ENCODE measurements at regions of chr4 and their contacts with region 1.

Region 1: GRCh38 chr4:3106339-3107186 is 32.1 kb downstream of the HTT start:
- DNase-seq: peak; percentile 63 to 89 (median 85)
- ATAC-seq: peak; percentile 100
- H3K4me3 ChIP-seq: no peak overlapping the region
- H3K4me3 Mint-ChIP-seq: no peak overlapping the region
- H3K27ac ChIP-seq: no peak overlapping the region
- H3K27ac Mint-ChIP-seq: peak overlapping the region; percentile 49
- H3K4me1 ChIP-seq: peaks cover 3% of the 10 kb centered on the region
- H3K4me1 Mint-ChIP-seq: peaks cover 8% of the 10 kb centered on the region
- H3K27me3 ChIP-seq: no peaks in the 10 kb centered on the region
- H3K27me3 Mint-ChIP-seq: no peaks in the 10 kb centered on the region
- CTCF ChIP-seq: peak; percentile 98

Region 2: DNA sequence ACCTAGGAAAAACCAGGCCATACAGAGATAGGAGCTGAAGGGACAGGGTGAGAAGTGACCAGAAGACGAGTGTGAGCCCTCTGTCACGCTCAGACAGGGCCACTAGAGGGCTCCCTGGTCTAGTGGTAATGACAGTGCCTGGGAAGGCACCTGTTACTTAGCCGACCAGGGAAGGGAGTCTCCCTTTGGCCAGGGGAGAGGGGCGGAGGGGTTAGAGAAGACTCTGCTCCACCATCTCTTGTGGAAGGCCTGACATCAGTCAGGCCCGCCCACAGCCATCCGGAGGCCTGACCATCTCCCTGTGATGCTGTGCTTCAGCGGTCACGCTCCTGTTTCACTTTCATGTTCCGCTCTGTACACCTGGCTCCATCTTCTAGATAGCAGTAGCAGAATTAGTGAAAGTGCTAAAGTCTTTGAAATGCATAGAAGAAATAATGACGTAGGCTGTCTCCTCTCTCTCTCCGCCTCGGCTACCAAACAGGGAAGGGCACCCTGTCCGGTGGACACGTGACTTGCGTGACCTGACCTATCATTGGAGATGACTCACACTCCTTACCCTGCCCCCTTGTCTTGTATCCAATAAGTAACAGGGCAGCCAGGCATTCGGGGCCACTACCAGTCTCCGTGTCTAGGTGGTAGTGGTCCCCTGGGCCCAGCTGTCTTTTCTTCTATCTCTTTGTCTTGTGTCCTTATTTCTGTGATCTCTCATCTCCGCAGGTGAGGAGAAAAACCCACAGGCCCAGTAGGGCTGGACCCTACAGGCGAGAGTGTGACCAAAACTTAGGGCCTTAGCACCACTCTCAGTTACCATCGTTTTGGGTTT is 58.9 kb before region 1 on chr4:
- CTCF ChIA-PET with region 1: no interaction called
- POLR2A ChIA-PET with region 1: no interaction called
- intact Hi-C with region 1: loop called (anchors 1 kb)
- DNase-seq: peak; percentile 44 to 87 (median 64)
- ATAC-seq: peak; percentile 73
- H3K4me3 ChIP-seq: peak overlapping the region; percentile 44 to 50
- H3K4me3 Mint-ChIP-seq: peak overlapping the region; percentile 78
- H3K27ac ChIP-seq: peak overlapping the region; percentile 27 to 79
- H3K27ac Mint-ChIP-seq: peak overlapping the region; percentile 60
- H3K4me1 ChIP-seq: peaks cover 15% of the 10 kb centered on the region
- H3K4me1 Mint-ChIP-seq: peaks cover 29% of the 10 kb centered on the region
- H3K27me3 ChIP-seq: no peaks in the 10 kb centered on the region
- H3K27me3 Mint-ChIP-seq: no peaks in the 10 kb centered on the region
- CTCF ChIP-seq: peak; percentile 61

Region 3: DNA sequence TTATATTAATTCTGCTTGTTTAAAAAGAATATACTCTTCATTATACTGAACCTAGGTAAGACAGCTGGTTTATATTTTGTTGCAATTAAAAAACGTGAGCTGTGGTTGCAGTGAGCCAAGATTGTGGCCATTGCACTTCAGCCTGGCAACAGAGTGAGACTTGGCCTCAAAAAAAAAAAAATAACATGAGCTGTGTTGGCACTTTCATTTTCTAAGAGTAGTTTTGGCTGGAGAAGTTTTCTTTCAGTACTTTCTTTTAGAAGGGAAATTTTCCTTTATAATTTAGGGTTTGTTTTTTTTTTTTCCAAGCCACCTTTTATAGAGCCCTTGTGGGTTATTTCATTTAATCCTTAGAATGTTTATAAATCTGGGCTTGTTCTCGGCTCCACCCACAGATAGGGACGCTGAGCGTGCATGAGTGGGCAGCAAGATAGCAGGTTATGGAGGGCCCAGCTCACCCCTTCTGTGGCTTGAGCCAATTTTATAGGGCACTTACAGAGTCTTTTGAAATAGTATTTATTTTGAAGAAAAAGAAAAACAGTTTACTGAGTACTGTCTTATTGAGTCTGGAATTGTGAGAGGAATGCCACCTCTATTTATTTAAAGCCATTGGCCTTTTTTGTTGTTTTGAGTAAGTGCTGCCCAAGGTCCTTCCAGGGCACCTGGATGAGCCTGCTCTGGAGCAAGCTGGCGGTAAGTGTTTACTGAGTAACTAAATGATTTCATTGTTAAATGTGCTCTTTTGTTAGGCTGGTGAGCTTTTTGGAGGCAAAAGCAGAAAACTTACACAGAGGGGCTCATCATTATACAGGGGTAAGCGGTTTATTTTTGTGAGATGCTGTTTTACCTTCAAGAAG is 28.8 kb after region 1 on chr4:
- CTCF ChIA-PET with region 1: interaction called, 23 read pairs
- POLR2A ChIA-PET with region 1: no interaction called
- intact Hi-C with region 1: no loop called
- DNase-seq: no peak
- ATAC-seq: no peak
- H3K4me3 ChIP-seq: no peak overlapping the region
- H3K4me3 Mint-ChIP-seq: no peak overlapping the region
- H3K27ac ChIP-seq: no peak overlapping the region
- H3K27ac Mint-ChIP-seq: no peak overlapping the region
- H3K4me1 ChIP-seq: no peaks in the 10 kb centered on the region
- H3K4me1 Mint-ChIP-seq: no peaks in the 10 kb centered on the region
- H3K27me3 ChIP-seq: no peaks in the 10 kb centered on the region
- H3K27me3 Mint-ChIP-seq: no peaks in the 10 kb centered on the region
- CTCF ChIP-seq: no peak

Region 4: GRCh38 chr4:3201718-3202702 is 95.4 kb after region 1 on chr4:
- CTCF ChIA-PET with region 1: interaction called, 4 read pairs
- POLR2A ChIA-PET with region 1: no interaction called
- intact Hi-C with region 1: loop called in 1 of 2 experiments (anchors 10 kb)
- DNase-seq: peak; percentile 36 to 92 (median 77)
- ATAC-seq: peak; percentile 95
- H3K4me3 ChIP-seq: peak overlapping the region; percentile 10 to 31
- H3K4me3 Mint-ChIP-seq: peak overlapping the region; percentile 70
- H3K27ac ChIP-seq: peak overlapping the region in 1 of 2 experiments; percentile 81
- H3K27ac Mint-ChIP-seq: peak overlapping the region; percentile 74
- H3K4me1 ChIP-seq: peaks cover 43% of the 10 kb centered on the region
- H3K4me1 Mint-ChIP-seq: peaks cover 56% of the 10 kb centered on the region
- H3K27me3 ChIP-seq: no peaks in the 10 kb centered on the region
- H3K27me3 Mint-ChIP-seq: no peaks in the 10 kb centered on the region
- CTCF ChIP-seq: no peak

Region 5: DNA sequence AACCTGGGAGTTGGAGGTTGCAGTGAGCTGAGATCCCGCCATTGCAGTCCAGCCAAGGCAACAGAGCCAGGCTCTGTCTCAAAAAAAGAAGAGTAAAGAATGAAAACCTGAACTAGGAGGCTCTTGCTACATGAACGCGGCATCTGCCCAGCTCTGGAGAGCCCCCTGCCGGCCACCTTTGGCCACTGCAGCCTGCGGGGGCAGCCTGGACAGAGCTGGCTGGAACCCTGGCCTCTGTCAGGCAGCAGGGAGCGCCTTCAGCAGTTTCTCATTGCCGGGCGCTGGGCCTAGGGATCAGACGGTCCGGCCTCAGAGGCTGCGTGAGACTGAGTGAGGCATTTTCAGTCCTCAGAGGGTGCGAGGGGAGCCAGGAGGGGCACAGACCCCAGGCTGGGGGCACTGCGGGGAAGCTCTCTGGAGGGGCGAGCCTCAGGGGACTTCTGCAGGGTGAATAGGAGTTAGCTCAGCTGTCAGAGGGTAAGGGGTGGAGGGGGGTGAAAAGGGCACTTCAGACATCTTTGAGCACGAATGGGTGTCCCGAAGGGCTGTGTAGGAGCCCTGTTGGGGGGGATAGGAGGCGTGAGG is 374.1 kb after region 1 on chr4:
- CTCF ChIA-PET with region 1: interaction called, 22 read pairs
- POLR2A ChIA-PET with region 1: no interaction called
- intact Hi-C with region 1: loop called in 1 of 2 experiments (anchors 1 kb)
- DNase-seq: peak; percentile 58 to 84 (median 68)
- ATAC-seq: peak; percentile 85
- H3K4me3 ChIP-seq: no peak overlapping the region
- H3K4me3 Mint-ChIP-seq: no peak overlapping the region
- H3K27ac ChIP-seq: no peak overlapping the region
- H3K27ac Mint-ChIP-seq: no peak overlapping the region
- H3K4me1 ChIP-seq: peaks cover 13% of the 10 kb centered on the region
- H3K4me1 Mint-ChIP-seq: peaks cover 2% of the 10 kb centered on the region
- H3K27me3 ChIP-seq: peaks cover 12 to 13% of the 10 kb centered on the region in 2 experiments
- H3K27me3 Mint-ChIP-seq: peaks cover 13% of the 10 kb centered on the region
- CTCF ChIP-seq: peak; percentile 77

Measured in CD8-positive, alpha-beta T cell (primary cell).